ENCODE measurements at regions of chr12 and their contacts with region 1.

Region 1: DNA sequence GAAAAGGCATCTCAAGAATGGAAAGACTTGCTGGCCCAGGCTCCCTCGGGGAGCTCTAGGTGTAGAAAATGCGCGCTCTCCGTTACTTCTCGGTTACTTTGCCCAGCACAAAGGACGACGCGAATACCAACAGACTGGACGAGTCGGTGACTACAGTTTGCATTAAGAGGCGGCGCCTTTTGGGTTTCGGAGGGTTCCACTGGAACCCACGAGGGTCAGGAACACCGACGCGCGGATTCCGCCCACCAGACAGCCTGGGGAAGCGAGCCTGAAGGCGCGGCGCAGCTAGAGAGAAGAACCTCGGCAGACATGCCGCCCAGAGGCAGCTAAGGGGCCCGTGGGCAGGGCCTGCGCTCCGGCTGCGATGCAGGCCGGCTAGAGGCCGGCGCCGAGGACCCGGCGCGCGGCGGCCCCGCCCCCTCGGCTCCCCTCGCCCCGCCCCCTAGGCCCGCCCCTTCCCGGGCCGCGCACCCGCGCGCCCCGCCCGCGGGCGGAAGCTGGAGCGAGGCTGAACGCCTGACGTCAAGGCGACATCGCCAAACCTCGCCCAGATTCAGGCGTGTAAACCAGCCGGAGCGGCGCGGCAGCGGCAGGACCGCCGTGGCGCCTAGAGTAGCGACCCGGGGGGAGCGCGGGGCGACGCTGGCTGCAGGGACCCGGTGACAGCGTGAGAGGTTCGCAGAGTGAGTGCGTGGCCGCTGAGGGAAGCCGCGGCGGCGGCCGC is at the start of gene RAP1B:
- DNase-seq: peak; percentile 92
- H3K4me3 ChIP-seq: peak within 1 kb of the TSS; percentile 80 to 93
- H3K27ac ChIP-seq: peak within 1 kb of the TSS; percentile 98
- H3K4me1 ChIP-seq: peaks cover 27% of the 10 kb centered on the region
- H3K27me3 ChIP-seq: no peaks in the 10 kb centered on the region
- CTCF ChIP-seq: no peak
- POLR2A ChIP-seq: peak; percentile 82
- total RNA-seq, gene RAP1B: 190 to 200 TPM

Region 2: GRCh38 chr12:68428724-68429501 is 181.6 kb before region 1 on chr12:
- intact Hi-C with region 1: no loop called
- DNase-seq: no peak
- H3K4me3 ChIP-seq: no peak overlapping the region
- H3K27ac ChIP-seq: no peak overlapping the region
- H3K4me1 ChIP-seq: no peaks in the 10 kb centered on the region
- H3K27me3 ChIP-seq: no peaks in the 10 kb centered on the region
- CTCF ChIP-seq: no peak
- POLR2A ChIP-seq: no peak

Region 3: GRCh38 chr12:68686595-68687521 is 76.3 kb after region 1 on chr12 and contains the start of gene NUP107:
- intact Hi-C with region 1: loop called (anchors 10 kb)
- DNase-seq: peak; percentile 98
- H3K4me3 ChIP-seq: peak within 1 kb of the TSS; percentile 89 to 95
- H3K27ac ChIP-seq: peak within 1 kb of the TSS; percentile 55 to 75
- H3K4me1 ChIP-seq: peaks cover 7% of the 10 kb centered on the region
- H3K27me3 ChIP-seq: no peaks in the 10 kb centered on the region
- CTCF ChIP-seq: peak in 1 of 3 experiments; percentile 22
- POLR2A ChIP-seq: no peak
- total RNA-seq, gene NUP107: 63.4 to 76.1 TPM